ENCODE measurements at regions of chr20 and their contacts with region 1.

Region 1: DNA sequence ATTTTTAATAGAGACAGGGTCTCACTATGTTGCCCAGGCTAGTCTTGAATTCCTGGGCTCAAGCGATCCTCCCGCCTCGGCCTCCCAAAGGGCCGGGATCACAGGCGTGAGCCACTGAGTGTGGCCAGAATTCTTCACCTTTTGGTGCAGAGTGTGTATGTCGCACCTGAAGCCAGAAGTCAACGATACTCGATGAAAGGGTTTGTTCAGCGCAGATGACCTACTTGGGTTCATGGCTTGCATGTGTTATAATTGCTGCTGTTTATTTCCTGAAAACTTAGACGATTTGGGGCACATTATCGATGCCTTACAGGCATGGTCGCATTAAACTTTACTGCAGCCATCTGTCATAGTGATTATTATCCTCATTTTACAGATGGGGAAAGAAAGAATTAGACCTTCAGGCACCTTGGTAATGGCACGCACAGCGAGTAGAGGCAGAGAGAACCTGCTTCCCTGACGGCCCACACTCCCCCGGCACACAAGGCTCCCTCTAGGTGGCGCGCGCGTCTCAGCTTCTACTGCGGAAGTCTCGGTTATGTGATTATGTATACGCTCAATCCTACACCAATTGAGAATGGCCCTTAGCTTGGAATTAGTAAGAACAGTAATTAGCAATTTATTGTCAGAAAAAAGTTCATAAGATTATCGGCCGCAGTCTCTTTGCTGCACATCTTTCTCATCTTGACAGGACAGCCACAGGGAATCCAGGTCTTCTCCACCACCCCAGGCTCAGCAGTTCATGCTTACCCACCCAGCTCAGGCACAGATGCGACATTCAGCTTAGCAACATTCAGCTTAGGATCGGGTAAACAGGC is 212.8 kb upstream of the PROKR2 start:
- DNase-seq: peak; percentile 65 to 79 (median 78)
- H3K4me3 ChIP-seq: no peak overlapping the region
- H3K4me3 Mint-ChIP-seq: peak overlapping the region in 1 of 2 donors; percentile 59
- H3K27ac ChIP-seq: no peak overlapping the region
- H3K27ac Mint-ChIP-seq: peak overlapping the region in 4 of 7 donors; percentile 57 to 78 (median 64)
- H3K4me1 ChIP-seq: peaks cover 51 to 54% of the 10 kb centered on the region in 2 donors
- H3K4me1 Mint-ChIP-seq: peaks cover 57% of the 10 kb centered on the region
- H3K27me3 ChIP-seq: no peaks in the 10 kb centered on the region
- H3K27me3 Mint-ChIP-seq: peaks cover 0 to 2% (median 0%) of the 10 kb centered on the region in 3 donors
- CTCF ChIP-seq: no peak

Region 2: DNA sequence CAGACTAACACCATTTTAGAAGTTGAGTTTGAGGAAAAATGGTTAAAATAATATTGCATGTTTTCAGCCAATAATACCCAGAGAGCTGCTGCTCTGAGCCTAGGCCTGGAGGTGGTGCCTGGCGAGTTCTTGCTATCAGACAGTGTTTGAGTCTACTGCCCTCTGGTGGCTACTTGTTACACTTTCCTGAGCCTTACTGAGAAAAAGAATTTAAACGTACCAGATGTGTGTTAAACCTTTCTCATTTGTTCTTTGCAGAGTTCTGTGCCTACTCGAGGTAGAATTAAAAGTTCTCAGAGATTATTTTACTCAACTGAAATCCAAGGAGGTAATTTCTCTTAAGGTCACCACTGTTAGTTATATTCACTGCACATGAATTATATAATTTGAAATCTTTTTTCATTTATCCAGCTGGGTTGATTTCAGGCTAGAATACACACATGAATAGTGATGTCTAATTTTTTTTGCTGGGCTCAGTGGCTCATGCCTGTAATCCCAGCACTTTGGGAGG is 258.9 kb after region 1 on chr20:
- intact Hi-C with region 1: loop called (anchors 2 to 5 kb)
- DNase-seq: peak; percentile 80 to 91 (median 85)
- H3K4me3 ChIP-seq: no peak overlapping the region
- H3K4me3 Mint-ChIP-seq: no peak overlapping the region
- H3K27ac ChIP-seq: no peak overlapping the region
- H3K27ac Mint-ChIP-seq: peak overlapping the region in 3 of 7 donors; percentile 11 to 77 (median 37)
- H3K4me1 ChIP-seq: no peaks in the 10 kb centered on the region
- H3K4me1 Mint-ChIP-seq: no peaks in the 10 kb centered on the region
- H3K27me3 ChIP-seq: no peaks in the 10 kb centered on the region
- H3K27me3 Mint-ChIP-seq: no peaks in the 10 kb centered on the region
- CTCF ChIP-seq: peak; percentile 77

Region 3: GRCh38 chr20:6074145-6074561 is 544.6 kb after region 1 on chr20:
- intact Hi-C with region 1: loop called (anchors 2 kb)
- DNase-seq: no peak
- H3K4me3 ChIP-seq: no peak overlapping the region
- H3K4me3 Mint-ChIP-seq: no peak overlapping the region
- H3K27ac ChIP-seq: no peak overlapping the region
- H3K27ac Mint-ChIP-seq: no peak overlapping the region
- H3K4me1 ChIP-seq: no peaks in the 10 kb centered on the region
- H3K4me1 Mint-ChIP-seq: no peaks in the 10 kb centered on the region
- H3K27me3 ChIP-seq: no peaks in the 10 kb centered on the region
- H3K27me3 Mint-ChIP-seq: peaks cover 0 to 2% (median 0%) of the 10 kb centered on the region in 3 donors
- CTCF ChIP-seq: no peak

Measured in CD14-positive monocyte (primary cell).